Activated CD8-positive, alpha-beta T cell treated with anti-CD3 and anti-CD28 coated beads, Interleukin-2, amount 10 ng/mL, durations not matched to agents 7 days and 5 days (primary cell): ENCODE measurements at regions of chr7 and their contacts with region 1.

Region 1: DNA sequence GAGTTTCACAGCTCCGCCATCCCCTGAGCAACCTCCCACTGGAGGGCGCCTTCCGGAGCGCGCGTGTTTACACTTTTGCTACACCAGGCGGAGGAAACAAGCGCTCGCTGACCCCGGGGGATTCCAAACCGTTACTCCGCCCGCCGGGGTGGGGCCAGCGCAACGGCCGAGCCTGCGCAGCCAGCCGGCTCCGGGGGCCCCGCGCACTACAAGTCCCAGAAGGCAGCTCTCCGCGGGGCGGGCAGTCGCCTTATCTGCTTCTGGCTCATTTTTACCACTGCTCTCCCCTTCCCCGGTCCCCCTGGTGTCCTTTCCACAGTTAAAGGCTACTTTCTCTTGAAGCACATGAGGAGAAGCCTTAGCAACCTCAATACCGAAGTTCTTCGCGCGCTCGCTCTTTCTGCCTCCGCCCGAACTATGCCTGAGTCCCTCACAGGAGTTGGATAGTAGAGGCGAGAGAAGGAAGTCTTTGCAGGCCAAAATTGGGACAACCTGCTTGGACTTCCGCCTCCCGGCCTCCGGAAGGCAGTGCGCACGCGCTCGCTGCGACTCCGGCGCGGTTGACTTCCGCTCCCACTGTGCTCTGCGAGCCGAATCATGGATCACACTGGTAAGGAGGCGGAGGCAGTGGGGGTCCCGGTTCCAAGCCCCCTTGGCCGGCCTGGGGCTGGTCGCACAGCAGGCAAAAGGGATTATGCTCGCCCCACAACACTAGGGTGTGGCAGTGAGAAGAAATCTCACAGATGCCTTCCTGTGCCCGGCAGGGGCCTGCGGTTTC is at the start of gene CBLL1:
- DNase-seq: peak; percentile 98
- ATAC-seq: peak; percentile 94
- H3K4me3 Mint-ChIP-seq: peak within 1 kb of the TSS; percentile 90
- H3K27ac Mint-ChIP-seq: peak within 1 kb of the TSS; percentile 100
- H3K4me1 Mint-ChIP-seq: peaks cover 39% of the 10 kb centered on the region
- H3K27me3 Mint-ChIP-seq: no peaks in the 10 kb centered on the region
- total RNA-seq, gene CBLL1: 36.3 to 42.4 TPM

Region 2: GRCh38 chr7:107462740-107463444 is 280.9 kb before region 1 on chr7:
- CTCF ChIA-PET with region 1: interaction called, 15 read pairs
- POLR2A ChIA-PET with region 1: interaction called, 3 read pairs
- DNase-seq: peak; percentile 57
- ATAC-seq: peak; percentile 80
- H3K4me3 Mint-ChIP-seq: no peak overlapping the region
- H3K27ac Mint-ChIP-seq: no peak overlapping the region
- H3K4me1 Mint-ChIP-seq: no peaks in the 10 kb centered on the region
- H3K27me3 Mint-ChIP-seq: no peaks in the 10 kb centered on the region

Region 3: DNA sequence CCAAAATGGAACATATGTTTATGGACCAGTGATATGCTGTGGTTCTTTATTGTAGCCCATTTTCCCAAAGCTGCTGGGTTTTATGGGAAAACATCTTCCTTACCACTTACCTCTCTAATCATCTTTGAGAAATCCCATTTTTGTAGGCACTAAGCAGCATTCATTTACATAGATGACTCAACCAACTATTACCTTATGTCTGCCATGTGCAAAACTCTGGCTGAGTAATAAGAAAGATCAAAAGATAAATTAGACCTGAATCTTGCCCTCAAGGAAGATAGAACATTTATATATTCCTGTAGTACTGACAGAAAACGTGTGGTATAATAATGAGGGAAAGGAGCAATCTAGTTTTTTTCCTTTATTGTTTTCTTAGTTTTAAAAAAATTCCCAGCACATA is 24.5 kb after region 1 on chr7:
- CTCF ChIA-PET with region 1: interaction called, 8 read pairs
- POLR2A ChIA-PET with region 1: interaction called, 11 read pairs
- DNase-seq: no peak
- ATAC-seq: no peak
- H3K4me3 Mint-ChIP-seq: no peak overlapping the region
- H3K27ac Mint-ChIP-seq: no peak overlapping the region
- H3K4me1 Mint-ChIP-seq: peaks cover 11% of the 10 kb centered on the region
- H3K27me3 Mint-ChIP-seq: peaks cover 2% of the 10 kb centered on the region

Region 4: DNA sequence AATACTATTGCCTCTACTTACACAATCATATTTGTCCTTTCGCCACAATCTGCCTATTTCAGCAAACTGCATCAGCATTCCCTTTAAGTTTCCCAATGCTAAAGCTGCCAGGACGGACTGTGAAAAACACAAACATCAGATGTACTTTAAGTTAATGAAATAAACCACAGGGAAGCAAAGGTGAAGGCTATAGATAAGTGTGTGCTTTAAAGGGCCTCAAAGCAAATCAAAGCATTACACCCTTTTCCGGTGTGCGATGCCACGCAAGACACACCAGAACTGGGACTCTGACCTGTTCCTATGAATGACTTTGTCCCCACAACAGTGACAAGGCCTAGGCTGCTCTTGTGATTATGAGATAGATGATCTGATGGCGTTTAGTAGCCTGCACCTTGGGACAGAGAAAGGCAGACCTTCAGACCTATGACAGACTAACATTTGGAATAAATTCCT is 35.9 kb after region 1 on chr7:
- CTCF ChIA-PET with region 1: no interaction called
- POLR2A ChIA-PET with region 1: no interaction called
- DNase-seq: no peak
- ATAC-seq: no peak
- H3K4me3 Mint-ChIP-seq: no peak overlapping the region
- H3K27ac Mint-ChIP-seq: no peak overlapping the region
- H3K4me1 Mint-ChIP-seq: no peaks in the 10 kb centered on the region
- H3K27me3 Mint-ChIP-seq: peaks cover 2% of the 10 kb centered on the region

Region 5: DNA sequence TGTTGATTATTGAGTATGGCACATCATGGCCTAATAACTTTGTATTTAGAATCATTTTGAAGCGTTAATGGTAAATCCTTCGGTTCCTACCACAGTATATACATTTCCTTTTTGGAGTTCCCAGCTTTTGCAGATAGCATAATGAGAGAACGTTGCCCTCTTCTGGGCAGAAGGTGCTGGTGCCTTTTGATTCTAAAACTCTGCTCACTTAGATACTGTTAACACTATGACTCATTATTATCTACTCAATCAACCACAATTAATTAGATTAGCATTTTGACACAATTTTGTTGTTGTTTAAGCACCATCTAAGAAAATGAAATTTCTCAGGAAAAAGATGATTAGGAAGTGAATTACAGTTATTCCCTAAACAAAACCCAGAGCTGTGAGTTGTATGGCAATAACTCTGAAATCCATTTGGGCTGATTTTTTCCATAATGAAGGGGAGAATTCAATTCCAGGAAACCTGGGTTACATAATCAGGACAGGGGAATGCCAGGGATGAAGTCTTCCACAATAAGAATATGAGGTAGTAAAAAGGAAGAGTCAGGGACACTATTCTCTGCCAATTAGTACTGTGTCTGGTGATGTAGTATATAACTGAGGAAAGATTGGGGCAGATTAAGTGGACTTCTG is 135.8 kb after region 1 on chr7:
- CTCF ChIA-PET with region 1: interaction called, 322 read pairs
- POLR2A ChIA-PET with region 1: interaction called, 30 read pairs
- DNase-seq: peak; percentile 51
- ATAC-seq: peak; percentile 58
- H3K4me3 Mint-ChIP-seq: no peak overlapping the region
- H3K27ac Mint-ChIP-seq: no peak overlapping the region
- H3K4me1 Mint-ChIP-seq: peaks cover 26% of the 10 kb centered on the region
- H3K27me3 Mint-ChIP-seq: peaks cover 5% of the 10 kb centered on the region